ENCODE measurements at regions of chr1 and their contacts with region 1.

Region 1: GRCh38 chr1:107782217-107782845 is 182.6 kb downstream of the VAV3 start:
- DNase-seq: peak in 5 of 9 experiments; percentile 25 to 82 (median 64)
- ATAC-seq: no peak
- H3K4me3 ChIP-seq: no peak overlapping the region
- H3K4me3 Mint-ChIP-seq: no peak overlapping the region
- H3K27ac ChIP-seq: no peak overlapping the region
- H3K27ac Mint-ChIP-seq: no peak overlapping the region
- H3K4me1 ChIP-seq: peaks cover 29% of the 10 kb centered on the region
- H3K4me1 Mint-ChIP-seq: peaks cover 36% of the 10 kb centered on the region
- H3K27me3 ChIP-seq: no peaks in the 10 kb centered on the region
- H3K27me3 Mint-ChIP-seq: no peaks in the 10 kb centered on the region
- CTCF ChIP-seq: peak; percentile 91

Region 2: DNA sequence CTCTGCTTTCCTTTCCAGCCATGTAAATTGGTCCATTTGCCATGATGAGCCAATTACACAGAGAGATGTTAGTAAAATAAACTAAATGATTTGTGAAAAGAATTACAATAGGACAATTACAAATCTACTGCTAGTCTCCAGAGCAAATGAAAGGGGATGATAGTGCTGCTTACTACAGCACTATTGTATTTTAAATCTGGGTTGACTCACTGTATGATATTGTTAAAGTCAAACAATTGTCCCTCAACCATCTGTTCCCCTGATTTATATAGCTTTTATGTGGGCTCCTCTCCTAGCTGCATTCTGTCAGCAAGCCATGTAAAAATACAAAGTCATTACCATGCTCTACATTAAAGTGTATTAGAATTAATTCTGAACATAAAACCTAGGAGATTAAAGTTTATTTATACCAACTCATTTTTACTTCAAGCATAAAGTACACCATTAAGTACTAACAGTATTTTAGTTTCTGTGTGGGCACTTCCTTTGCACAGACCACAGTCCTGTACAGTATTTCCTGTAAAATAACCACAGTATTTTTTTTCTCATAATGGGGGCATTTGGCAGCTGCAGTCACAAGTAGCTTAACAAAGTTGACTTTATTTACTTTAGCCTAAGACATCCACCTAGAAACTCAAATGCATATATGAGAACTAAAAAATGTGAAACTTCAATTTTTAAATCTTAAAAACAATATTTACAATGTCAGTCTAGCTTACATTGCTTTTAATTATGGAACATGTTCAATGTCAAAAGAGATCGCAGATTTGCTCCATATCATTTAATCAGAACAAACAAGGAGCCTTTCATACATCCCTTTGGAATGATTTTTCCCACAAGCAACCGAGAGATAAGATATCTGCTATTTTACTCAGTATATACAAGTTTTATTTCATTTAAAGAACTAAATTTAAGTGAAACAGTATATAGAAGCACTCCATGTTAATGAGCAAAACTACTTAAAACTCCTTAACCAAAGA is 47.0 kb after region 1 on chr1:
- CTCF ChIA-PET with region 1: interaction called, 6 read pairs
- POLR2A ChIA-PET with region 1: no interaction called
- intact Hi-C with region 1: loop called in 1 of 2 experiments (anchors 5 kb)
- DNase-seq: peak in 2 of 9 experiments; percentile 59 to 72
- ATAC-seq: peak; percentile 76
- H3K4me3 ChIP-seq: no peak overlapping the region
- H3K4me3 Mint-ChIP-seq: peak overlapping the region; percentile 58
- H3K27ac ChIP-seq: peak overlapping the region in 1 of 2 experiments; percentile 56
- H3K27ac Mint-ChIP-seq: peak overlapping the region; percentile 70
- H3K4me1 ChIP-seq: peaks cover 41% of the 10 kb centered on the region
- H3K4me1 Mint-ChIP-seq: peaks cover 56% of the 10 kb centered on the region
- H3K27me3 ChIP-seq: no peaks in the 10 kb centered on the region
- H3K27me3 Mint-ChIP-seq: no peaks in the 10 kb centered on the region
- CTCF ChIP-seq: no peak

Region 3: GRCh38 chr1:107963601-107964335 is 181.4 kb after region 1 on chr1:
- CTCF ChIA-PET with region 1: interaction called, 57 read pairs
- POLR2A ChIA-PET with region 1: interaction called, 8 read pairs
- intact Hi-C with region 1: loop called (anchors 1 to 2 kb)
- DNase-seq: peak; percentile 8 to 83 (median 43)
- ATAC-seq: peak; percentile 73
- H3K4me3 ChIP-seq: peak overlapping the region; percentile 67 to 91
- H3K4me3 Mint-ChIP-seq: peak overlapping the region; percentile 95
- H3K27ac ChIP-seq: peak overlapping the region; percentile 74 to 79
- H3K27ac Mint-ChIP-seq: peak overlapping the region; percentile 93
- H3K4me1 ChIP-seq: peaks cover 15% of the 10 kb centered on the region
- H3K4me1 Mint-ChIP-seq: peaks cover 28% of the 10 kb centered on the region
- H3K27me3 ChIP-seq: no peaks in the 10 kb centered on the region
- H3K27me3 Mint-ChIP-seq: no peaks in the 10 kb centered on the region
- CTCF ChIP-seq: no peak

Region 4: DNA sequence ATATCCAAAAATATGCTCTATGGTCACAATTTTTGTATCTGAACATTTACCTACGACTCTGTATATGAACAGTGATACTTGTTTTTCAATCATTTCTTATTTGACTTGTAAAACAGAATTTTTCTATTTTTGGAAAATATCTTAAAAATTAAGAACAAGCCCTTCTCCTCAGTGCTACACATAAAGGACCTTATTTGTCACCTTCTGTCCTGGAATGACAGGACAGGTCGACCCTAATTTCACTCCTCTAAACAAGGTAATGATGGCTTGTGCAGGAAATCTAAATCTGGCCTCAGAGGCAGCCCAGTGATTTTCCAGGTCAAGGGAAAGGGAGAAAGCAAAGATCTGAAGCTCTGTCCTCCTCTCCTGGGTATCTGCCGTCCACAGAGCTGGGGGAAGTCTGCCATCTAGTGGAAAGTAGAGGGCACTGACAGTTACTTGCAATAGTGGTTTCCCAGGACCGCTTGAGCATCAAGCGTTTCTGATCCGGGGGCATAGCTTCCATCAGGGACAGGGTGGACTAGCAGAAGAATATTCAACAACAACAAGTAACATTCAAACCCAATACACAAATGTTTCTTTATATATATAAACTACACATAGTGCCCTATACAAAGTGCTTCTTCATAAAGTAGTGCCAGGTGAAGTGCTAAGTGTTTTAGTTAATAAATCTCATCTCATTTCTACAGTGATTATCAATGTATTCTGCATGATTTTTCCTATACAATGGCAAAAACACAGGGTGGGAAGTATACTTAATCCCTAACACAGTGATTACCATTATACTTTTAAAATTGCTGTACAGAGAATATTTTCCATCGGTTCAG is 343.2 kb after region 1 on chr1:
- CTCF ChIA-PET with region 1: interaction called, 492 read pairs
- POLR2A ChIA-PET with region 1: interaction called, 15 read pairs
- intact Hi-C with region 1: loop called (anchors 1 kb)
- DNase-seq: peak; percentile 36 to 86 (median 67)
- ATAC-seq: peak; percentile 97
- H3K4me3 ChIP-seq: no peak overlapping the region
- H3K4me3 Mint-ChIP-seq: no peak overlapping the region
- H3K27ac ChIP-seq: no peak overlapping the region
- H3K27ac Mint-ChIP-seq: no peak overlapping the region
- H3K4me1 ChIP-seq: no peaks in the 10 kb centered on the region
- H3K4me1 Mint-ChIP-seq: peaks cover 4% of the 10 kb centered on the region
- H3K27me3 ChIP-seq: no peaks in the 10 kb centered on the region
- H3K27me3 Mint-ChIP-seq: no peaks in the 10 kb centered on the region
- CTCF ChIP-seq: peak; percentile 88

Region 5: GRCh38 chr1:108512239-108512981 is 730.1 kb after region 1 on chr1:
- CTCF ChIA-PET with region 1: no interaction called
- POLR2A ChIA-PET with region 1: no interaction called
- intact Hi-C with region 1: loop called in 1 of 2 experiments (anchors 5 kb)
- DNase-seq: peak in 2 of 9 experiments; percentile 65 to 75
- ATAC-seq: peak; percentile 69
- H3K4me3 ChIP-seq: no peak overlapping the region
- H3K4me3 Mint-ChIP-seq: no peak overlapping the region
- H3K27ac ChIP-seq: no peak overlapping the region
- H3K27ac Mint-ChIP-seq: no peak overlapping the region
- H3K4me1 ChIP-seq: no peaks in the 10 kb centered on the region
- H3K4me1 Mint-ChIP-seq: no peaks in the 10 kb centered on the region
- H3K27me3 ChIP-seq: no peaks in the 10 kb centered on the region
- H3K27me3 Mint-ChIP-seq: peaks cover 21% of the 10 kb centered on the region
- CTCF ChIP-seq: peak; percentile 99